Naive thymus-derived CD4-positive, alpha-beta T cell (primary cell): ENCODE measurements at regions of chr14 and their contacts with region 1.

Region 1: DNA sequence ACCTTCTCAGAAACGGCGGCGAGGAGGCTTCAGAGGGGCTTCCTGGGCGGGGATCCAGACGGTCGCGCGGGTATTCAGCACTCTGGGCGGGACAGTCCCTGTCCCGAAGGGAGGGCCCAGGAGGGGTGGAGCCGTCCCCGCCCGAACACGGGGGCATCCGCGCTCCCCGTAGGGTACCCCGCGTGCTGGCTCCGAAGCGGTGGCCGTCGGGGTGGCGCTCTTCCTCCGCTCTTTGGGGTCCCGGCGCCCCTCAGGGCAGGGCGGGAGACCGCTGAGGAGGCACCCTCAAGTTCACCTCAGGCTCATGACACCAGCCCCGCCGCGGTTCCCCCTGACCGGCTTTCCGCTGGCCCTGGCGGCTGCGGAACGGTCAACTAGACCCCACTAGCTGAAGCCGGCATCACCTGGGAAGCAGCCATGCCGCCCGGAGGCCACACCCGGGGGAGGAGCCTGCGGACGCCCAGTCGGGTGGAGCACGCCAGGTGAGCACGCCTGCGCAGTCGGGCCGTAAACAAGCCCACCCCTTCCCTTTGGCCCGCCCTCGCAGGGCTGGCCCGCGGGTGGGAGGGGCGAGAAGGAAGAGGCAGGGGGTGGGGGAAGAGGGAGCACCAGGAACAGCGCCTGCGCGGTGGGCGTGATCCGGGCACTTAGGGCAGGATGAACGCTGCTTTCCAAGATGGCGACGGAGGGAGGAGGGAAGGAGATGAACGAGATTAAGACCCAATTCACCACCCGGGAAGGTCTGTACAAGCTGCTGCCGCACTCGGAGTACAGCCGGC is at the start of gene WDR20:
- DNase-seq: peak; percentile 98 to 100 (median 99)
- ATAC-seq: peak; percentile 98
- H3K4me3 ChIP-seq: peak within 1 kb of the TSS; percentile 80
- H3K4me3 Mint-ChIP-seq: peak within 1 kb of the TSS; percentile 96 to 99 (median 98)
- H3K27ac ChIP-seq: peak within 1 kb of the TSS; percentile 90
- H3K27ac Mint-ChIP-seq: peak within 1 kb of the TSS; percentile 95 to 99 (median 96)
- H3K4me1 ChIP-seq: peaks cover 18 to 22% of the 10 kb centered on the region in 2 donors
- H3K4me1 Mint-ChIP-seq: peaks cover 17 to 36% (median 26%) of the 10 kb centered on the region in 7 donors
- H3K27me3 ChIP-seq: no peaks in the 10 kb centered on the region
- H3K27me3 Mint-ChIP-seq: no peaks in the 10 kb centered on the region
- total RNA-seq, gene WDR20: 33.1 to 67.8 (median 47.5) TPM

Region 2: GRCh38 chr14:101791919-101792572 is 347.4 kb before region 1 on chr14:
- CTCF ChIA-PET with region 1: no interaction called
- POLR2A ChIA-PET with region 1: no interaction called
- intact Hi-C with region 1: loop called in 1 of 2 experiments (anchors 1 kb)
- DNase-seq: peak in 4 of 9 donors; percentile 38 to 54 (median 50)
- ATAC-seq: peak; percentile 67
- H3K4me3 ChIP-seq: peak overlapping the region; percentile 36
- H3K4me3 Mint-ChIP-seq: peak overlapping the region; percentile 39 to 85 (median 77)
- H3K27ac ChIP-seq: peak overlapping the region; percentile 70
- H3K27ac Mint-ChIP-seq: peak overlapping the region; percentile 76 to 93 (median 86)
- H3K4me1 ChIP-seq: peaks cover 3 to 9% of the 10 kb centered on the region in 2 donors
- H3K4me1 Mint-ChIP-seq: peaks cover 12 to 42% (median 27%) of the 10 kb centered on the region in 7 donors
- H3K27me3 ChIP-seq: no peaks in the 10 kb centered on the region
- H3K27me3 Mint-ChIP-seq: no peaks in the 10 kb centered on the region

Region 3: DNA sequence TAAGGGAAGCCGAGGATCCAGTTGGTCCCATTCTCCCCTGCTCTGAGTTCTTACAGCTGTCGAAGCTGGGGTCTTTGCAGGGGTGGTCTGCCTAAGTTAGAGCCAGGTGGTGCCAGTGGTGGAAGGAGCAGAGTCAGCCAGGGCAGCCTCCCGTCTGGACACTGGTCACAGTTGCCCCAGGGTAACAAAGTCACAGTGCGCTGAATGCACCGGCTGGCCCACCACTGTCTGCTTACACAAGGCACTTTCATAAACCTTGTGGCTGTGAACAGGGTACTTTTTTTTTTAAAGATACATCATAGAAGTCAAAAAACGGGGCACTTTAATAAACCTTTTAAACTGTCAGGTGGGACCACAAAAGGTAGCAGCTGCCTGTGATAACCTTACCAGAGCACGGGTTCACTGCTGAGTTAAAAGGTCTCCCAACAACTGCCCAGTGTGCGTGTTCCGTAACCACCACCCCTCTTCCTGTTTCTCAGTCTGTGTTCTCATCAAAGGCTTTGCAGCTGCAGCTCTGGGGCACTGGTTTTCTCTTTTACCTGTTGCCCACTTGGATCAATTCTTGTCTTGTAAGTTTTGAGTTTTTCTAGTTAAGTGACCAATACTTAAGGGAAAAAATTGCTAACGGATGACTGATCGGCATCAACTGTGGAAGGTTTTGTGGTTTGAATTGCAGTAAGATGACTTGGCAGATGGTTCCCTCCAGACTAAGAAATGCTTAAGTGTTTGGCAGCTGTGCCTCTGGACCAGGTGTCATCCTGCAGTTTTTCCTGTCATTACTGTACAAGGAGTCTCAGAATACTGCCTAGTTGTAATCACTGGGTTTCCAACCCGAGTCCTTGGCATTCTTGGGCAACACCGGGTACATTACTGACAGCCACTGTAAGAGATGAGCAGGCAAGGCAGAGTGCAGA is 119.1 kb before region 1 on chr14:
- CTCF ChIA-PET with region 1: no interaction called
- POLR2A ChIA-PET with region 1: no interaction called
- intact Hi-C with region 1: no loop called
- DNase-seq: peak in 8 of 9 donors; percentile 35 to 71 (median 60)
- ATAC-seq: peak; percentile 82
- H3K4me3 ChIP-seq: no peak overlapping the region
- H3K4me3 Mint-ChIP-seq: peak overlapping the region; percentile 9 to 81 (median 60)
- H3K27ac ChIP-seq: peak overlapping the region; percentile 51
- H3K27ac Mint-ChIP-seq: peak overlapping the region; percentile 76 to 94 (median 89)
- H3K4me1 ChIP-seq: peaks cover 0 to 14% of the 10 kb centered on the region in 2 donors
- H3K4me1 Mint-ChIP-seq: peaks cover 11 to 23% (median 15%) of the 10 kb centered on the region in 7 donors
- H3K27me3 ChIP-seq: no peaks in the 10 kb centered on the region
- H3K27me3 Mint-ChIP-seq: no peaks in the 10 kb centered on the region

Region 4: DNA sequence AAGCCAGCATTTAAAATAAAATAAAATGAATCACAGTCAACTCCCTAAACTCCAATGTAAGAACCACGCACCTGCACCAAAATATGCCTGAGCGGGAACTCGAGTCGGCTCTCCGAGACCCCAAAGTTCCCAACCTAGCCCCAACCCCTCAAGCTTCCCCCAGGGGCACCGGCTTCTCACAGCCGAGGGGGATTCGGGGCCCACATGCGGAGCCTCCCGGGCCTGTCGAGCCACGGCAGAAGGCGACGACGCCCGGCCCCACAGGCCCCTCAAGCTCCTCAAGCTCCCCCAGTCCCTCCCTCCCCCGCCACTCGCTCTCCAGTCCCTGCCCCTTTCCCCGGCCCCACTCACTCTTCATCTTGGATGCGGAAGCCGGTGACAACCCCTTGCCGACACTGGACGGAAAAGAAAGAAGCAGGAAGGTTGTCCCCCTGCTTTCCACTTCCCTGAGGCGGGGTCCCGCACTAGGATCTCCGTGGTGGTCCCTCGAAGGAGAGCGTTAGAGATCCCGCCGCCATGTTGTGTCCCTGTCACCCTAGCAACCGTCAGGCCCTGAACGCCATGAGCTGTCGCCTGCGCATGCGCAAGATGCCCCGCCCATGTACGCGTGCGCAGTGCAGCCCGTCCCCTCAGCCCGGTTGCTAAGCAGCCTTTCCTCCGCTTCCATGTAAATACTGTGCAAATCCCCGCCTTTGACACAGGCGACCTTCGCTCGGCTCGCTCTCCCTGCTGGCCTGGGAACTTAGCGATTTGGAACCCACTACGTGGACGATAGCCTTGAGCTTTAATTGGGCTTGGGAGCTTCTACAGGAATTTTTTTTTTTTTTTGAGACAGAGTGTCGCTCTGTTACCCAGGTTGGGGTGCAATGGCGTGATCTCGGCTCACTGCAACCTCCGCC is 165.4 kb after region 1 on chr14 and contains the start of gene MOK:
- CTCF ChIA-PET with region 1: no interaction called
- POLR2A ChIA-PET with region 1: no interaction called
- intact Hi-C with region 1: loop called (anchors 1 kb)
- DNase-seq: peak; percentile 94 to 99 (median 98)
- ATAC-seq: peak; percentile 95
- H3K4me3 ChIP-seq: peak within 1 kb of the TSS; percentile 75
- H3K4me3 Mint-ChIP-seq: peak within 1 kb of the TSS; percentile 86 to 99 (median 96)
- H3K27ac ChIP-seq: peak within 1 kb of the TSS; percentile 81
- H3K27ac Mint-ChIP-seq: peak within 1 kb of the TSS; percentile 87 to 99 (median 95)
- H3K4me1 ChIP-seq: peaks cover 0 to 2% of the 10 kb centered on the region in 2 donors
- H3K4me1 Mint-ChIP-seq: peaks cover 0 to 16% (median 13%) of the 10 kb centered on the region in 7 donors
- H3K27me3 ChIP-seq: no peaks in the 10 kb centered on the region
- H3K27me3 Mint-ChIP-seq: peaks cover 0 to 16% (median 0%) of the 10 kb centered on the region in 5 donors
- total RNA-seq, gene MOK: 1.3 to 3.5 (median 1.9) TPM

Region 5: GRCh38 chr14:102362545-102363181 is 223.2 kb after region 1 on chr14 and contains the starts of genes CINP and TECPR2:
- CTCF ChIA-PET with region 1: no interaction called
- POLR2A ChIA-PET with region 1: no interaction called
- intact Hi-C with region 1: loop called (anchors 1 kb)
- DNase-seq: peak; percentile 88 to 95 (median 92)
- ATAC-seq: peak; percentile 97
- H3K4me3 ChIP-seq: peak within 1 kb of the TSS; percentile 96
- H3K4me3 Mint-ChIP-seq: peak within 1 kb of the TSS in 6 of 10 donors; percentile 92 to 97 (median 95)
- H3K27ac ChIP-seq: peak within 1 kb of the TSS; percentile 87
- H3K27ac Mint-ChIP-seq: peak within 1 kb of the TSS; percentile 82 to 99 (median 96)
- H3K4me1 ChIP-seq: peaks cover 6 to 15% of the 10 kb centered on the region in 2 donors
- H3K4me1 Mint-ChIP-seq: peaks cover 17 to 42% (median 36%) of the 10 kb centered on the region in 7 donors
- H3K27me3 ChIP-seq: no peaks in the 10 kb centered on the region
- H3K27me3 Mint-ChIP-seq: no peaks in the 10 kb centered on the region
- total RNA-seq, gene CINP: 16.8 to 34.4 (median 31.8) TPM
- total RNA-seq, gene TECPR2: 8.7 to 12.9 (median 11.4) TPM

Region 6: GRCh38 chr14:102509744-102510615 is 370.5 kb after region 1 on chr14 and contains the start of gene ANKRD9:
- CTCF ChIA-PET with region 1: no interaction called
- POLR2A ChIA-PET with region 1: no interaction called
- intact Hi-C with region 1: loop called in 1 of 2 experiments (anchors 5 kb)
- DNase-seq: peak; percentile 48 to 94 (median 66)
- ATAC-seq: peak; percentile 83
- H3K4me3 ChIP-seq: peak within 1 kb of the TSS; percentile 75
- H3K4me3 Mint-ChIP-seq: peak within 1 kb of the TSS; percentile 85 to 91 (median 88)
- H3K27ac ChIP-seq: peak within 1 kb of the TSS; percentile 58
- H3K27ac Mint-ChIP-seq: peak within 1 kb of the TSS in 8 of 9 donors; percentile 20 to 74 (median 59)
- H3K4me1 ChIP-seq: peaks cover 4 to 14% of the 10 kb centered on the region in 2 donors
- H3K4me1 Mint-ChIP-seq: peaks cover 0 to 21% (median 10%) of the 10 kb centered on the region in 7 donors
- H3K27me3 ChIP-seq: no peaks in the 10 kb centered on the region
- H3K27me3 Mint-ChIP-seq: peaks cover 0 to 3% (median 0%) of the 10 kb centered on the region in 5 donors
- total RNA-seq, gene ANKRD9: 1.1 to 8.1 (median 2.2) TPM

Region 7: DNA sequence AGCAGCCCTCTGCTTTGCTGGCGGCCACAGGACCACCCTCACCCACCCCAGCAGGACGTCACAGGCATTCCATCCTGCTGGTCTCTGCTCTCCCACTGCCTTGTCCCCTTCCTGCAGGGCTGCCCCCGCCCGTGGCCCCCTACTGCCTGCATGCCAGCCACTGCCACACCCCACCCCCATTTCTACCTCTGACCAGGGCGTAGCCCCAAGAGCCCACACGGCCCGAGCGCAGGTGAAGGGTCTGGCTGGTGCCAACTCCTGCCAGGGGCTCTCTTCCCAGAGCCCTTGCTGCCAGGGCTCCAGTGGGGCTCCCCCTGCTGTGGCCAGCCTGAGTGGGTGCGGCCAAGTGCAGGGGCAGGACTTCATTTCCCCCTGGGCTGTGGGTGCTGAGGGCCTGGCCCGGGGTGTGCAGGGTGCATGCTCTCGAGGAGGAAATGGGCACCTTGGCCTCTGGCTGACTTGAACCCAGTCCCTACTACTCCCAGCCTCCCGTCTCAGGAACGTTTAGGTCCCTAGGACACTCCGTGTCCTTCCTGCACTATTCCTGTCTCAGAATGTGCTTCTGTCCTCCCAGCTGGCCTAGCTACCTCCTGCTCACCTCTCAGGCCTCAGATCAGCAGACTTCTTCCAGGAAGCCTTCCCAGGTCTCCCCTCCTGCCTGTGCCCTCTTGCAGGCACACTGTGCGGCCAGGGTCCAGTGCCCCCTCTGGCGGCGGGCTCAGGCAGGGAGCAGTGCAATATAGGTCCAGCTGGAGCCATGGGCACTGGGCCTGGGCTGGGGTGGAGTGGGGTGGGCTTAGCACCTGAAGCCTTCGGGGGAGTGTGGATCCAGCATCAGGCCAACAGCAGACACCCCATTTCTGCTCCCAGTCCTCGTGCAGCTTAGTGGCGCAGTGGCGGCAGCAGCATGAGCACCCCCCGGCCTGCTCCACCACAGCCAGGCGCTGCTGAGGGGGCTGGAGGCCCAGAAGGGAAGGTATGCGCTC is 946.0 kb after region 1 on chr14:
- CTCF ChIA-PET with region 1: no interaction called
- POLR2A ChIA-PET with region 1: no interaction called
- intact Hi-C with region 1: no loop called
- DNase-seq: no peak
- ATAC-seq: no peak
- H3K4me3 ChIP-seq: no peak overlapping the region
- H3K4me3 Mint-ChIP-seq: no peak overlapping the region
- H3K27ac ChIP-seq: no peak overlapping the region
- H3K27ac Mint-ChIP-seq: no peak overlapping the region
- H3K4me1 ChIP-seq: no peaks in the 10 kb centered on the region
- H3K4me1 Mint-ChIP-seq: peaks cover 0 to 3% (median 0%) of the 10 kb centered on the region in 7 donors
- H3K27me3 ChIP-seq: no peaks in the 10 kb centered on the region
- H3K27me3 Mint-ChIP-seq: peaks cover 4 to 25% (median 6%) of the 10 kb centered on the region in 5 donors